ENCODE measurements at regions of chr21 and their contacts with region 1.

Region 1: DNA sequence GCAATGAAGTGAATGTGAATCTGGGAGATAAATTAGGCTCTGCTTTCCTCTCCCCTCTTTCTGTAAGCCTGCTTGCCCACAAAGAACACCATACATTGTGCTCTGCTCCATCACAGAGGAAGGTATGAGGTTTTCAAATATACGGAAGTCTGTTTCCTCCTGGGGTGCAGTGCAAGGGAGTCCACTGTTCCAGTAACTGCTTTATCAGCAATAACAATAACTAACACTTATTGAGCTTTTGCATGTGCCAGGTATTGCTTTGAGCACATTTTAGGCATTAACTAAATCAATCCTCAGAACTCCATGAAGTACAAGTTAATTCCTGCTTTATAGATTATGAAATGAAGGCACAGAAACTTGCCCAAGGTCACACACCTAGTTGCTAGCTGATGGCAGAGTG is 10.0 kb downstream of the LTN1 start:
- DNase-seq: no peak
- H3K4me3 ChIP-seq: no peak overlapping the region
- H3K27ac ChIP-seq: no peak overlapping the region
- H3K4me1 ChIP-seq: no peaks in the 10 kb centered on the region
- H3K27me3 ChIP-seq: no peaks in the 10 kb centered on the region
- CTCF ChIP-seq: no peak
- POLR2A ChIP-seq: no peak

Region 2: GRCh38 chr21:28215214-28215954 is 767.3 kb before region 1 on chr21:
- intact Hi-C with region 1: loop called (anchors 5 kb)
- DNase-seq: no peak
- H3K4me3 ChIP-seq: no peak overlapping the region
- H3K27ac ChIP-seq: no peak overlapping the region
- H3K4me1 ChIP-seq: no peaks in the 10 kb centered on the region
- H3K27me3 ChIP-seq: no peaks in the 10 kb centered on the region
- CTCF ChIP-seq: no peak
- POLR2A ChIP-seq: no peak

Measured in breast epithelium (tissue), 4 donors.